PC-3 (cell line): ENCODE measurements at regions of chr1 and their contacts with region 1.

Region 1: DNA sequence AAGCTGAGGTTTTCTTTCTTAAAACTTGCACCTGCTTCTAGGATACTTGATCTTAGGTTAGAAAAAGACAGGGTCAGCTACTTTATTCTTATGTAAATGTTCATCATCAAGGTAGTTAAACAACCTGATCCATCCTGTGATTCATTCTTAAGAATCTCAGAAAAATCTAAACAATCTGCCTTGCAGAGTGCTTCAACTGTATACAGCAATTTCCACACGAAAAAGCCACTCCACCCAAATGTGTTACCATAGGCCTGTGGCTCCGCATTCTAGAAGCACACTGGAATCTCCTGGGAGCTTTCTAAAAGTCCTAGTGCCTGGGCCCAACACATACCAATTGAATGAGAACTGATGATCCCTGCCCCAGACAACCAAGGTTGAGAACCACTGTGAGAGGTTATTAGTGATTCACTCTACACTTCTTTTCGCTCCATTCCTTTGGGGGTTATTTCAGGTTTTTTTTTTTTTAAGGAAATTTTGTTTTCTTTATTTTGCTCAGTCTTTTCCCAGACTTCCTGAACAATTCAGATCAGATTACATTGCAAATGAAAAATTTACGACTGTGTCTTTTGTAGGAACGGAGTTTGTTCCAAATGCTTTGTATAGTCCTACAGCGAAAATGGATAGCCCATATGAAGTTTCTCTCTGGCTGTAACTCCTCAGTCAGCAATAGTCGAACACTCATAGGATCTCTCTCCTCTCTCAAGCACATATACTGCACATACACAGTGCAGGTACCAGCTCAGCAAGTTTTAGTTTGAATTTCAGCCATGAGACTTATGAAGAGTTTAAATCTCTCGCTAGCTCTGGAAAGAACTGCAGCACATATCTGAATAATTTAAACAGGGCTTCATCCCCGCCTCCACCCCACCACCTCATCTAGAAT is 16.1 kb downstream of the SMYD2 start:
- DNase-seq: peak; percentile 84
- ATAC-seq: peak; percentile 89
- H3K4me3 ChIP-seq: peak overlapping the region; percentile 3; the same call in 1 of the 2 replicates
- H3K27ac ChIP-seq: peak overlapping the region; percentile 19
- H3K4me1 ChIP-seq: peaks cover 23% of the 10 kb centered on the region
- H3K27me3 ChIP-seq: no peaks in the 10 kb centered on the region
- CTCF ChIP-seq: no peak

Region 2: DNA sequence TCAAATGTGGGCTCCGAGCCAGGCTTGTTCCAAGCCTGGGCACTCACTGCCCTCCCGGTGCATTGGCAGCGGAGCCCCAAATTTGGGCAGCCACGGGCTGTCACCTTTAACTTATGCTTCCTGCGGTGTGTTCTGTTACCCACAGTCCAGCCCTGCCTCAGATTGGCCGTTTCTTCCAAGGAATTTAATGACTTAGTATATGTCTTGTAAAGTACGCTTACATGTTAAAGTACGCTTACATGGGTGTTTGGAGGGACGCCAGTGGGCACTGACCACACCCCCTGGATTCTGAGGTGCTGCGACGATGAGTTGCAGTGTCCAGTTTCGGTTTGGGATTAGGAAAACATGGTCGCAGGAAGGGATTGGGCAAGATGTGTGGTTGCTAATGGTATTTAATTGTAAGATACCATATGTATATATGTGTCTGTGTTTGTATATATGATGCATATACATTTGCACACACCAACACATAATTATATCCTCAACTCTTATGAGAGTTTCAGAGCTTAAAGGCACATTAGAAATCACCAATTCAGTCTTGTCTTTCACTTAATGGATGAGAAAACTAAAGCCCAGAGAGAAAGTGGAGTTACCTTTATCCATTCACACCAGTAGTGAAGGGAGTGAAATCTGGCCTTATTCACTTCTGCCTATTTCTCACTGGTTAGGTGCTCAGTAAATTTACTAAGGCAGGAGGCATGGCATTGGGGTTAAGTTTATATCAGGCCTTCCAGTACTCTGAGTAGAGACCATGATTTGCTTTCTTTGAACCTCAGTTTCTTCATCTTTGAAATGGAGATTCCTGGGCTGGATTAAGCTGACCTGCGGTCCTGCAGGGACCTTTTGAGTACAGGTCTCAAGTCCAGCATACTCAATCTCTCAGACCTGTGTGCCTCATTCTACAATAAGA is 15.1 kb before region 1 on chr1:
- CTCF ChIA-PET with region 1: no interaction called
- POLR2A ChIA-PET with region 1: no interaction called
- intact Hi-C with region 1: loop called (anchors 2 kb)
- DNase-seq: peak; percentile 81
- ATAC-seq: peak; percentile 13
- H3K4me3 ChIP-seq: peak overlapping the region; percentile 82
- H3K27ac ChIP-seq: peak overlapping the region; percentile 39
- H3K4me1 ChIP-seq: peaks cover 37% of the 10 kb centered on the region
- H3K27me3 ChIP-seq: no peaks in the 10 kb centered on the region
- CTCF ChIP-seq: no peak

Region 3: GRCh38 chr1:214316593-214316992 is 19.5 kb after region 1 on chr1:
- CTCF ChIA-PET with region 1: no interaction called
- POLR2A ChIA-PET with region 1: no interaction called
- intact Hi-C with region 1: loop called (anchors 2 kb)
- DNase-seq: peak; percentile 67
- ATAC-seq: peak; percentile 87
- H3K4me3 ChIP-seq: no peak overlapping the region
- H3K27ac ChIP-seq: no peak overlapping the region
- H3K4me1 ChIP-seq: peaks cover 8% of the 10 kb centered on the region
- H3K27me3 ChIP-seq: no peaks in the 10 kb centered on the region
- CTCF ChIP-seq: no peak